ENCODE measurements at regions of chr9 and their contacts with region 1.

Region 1: DNA sequence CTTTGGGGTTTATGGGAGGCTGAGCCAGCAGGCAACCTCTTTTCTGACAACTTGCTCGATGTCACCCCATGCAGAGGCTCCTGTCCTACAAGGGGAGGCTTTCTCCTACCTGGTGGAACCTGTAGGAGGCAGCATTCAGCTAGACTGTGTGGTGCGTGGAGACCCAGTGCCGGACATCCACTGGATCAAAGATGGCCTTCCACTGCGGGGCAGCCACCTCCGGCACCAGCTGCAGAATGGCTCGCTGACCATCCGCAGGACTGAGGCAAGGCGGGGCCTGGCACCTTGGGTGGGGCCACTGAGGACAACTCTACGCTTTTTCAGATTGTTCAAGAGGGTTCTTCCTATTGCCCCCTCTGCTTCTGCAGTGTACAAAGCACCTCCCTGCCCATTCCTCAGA is 36.1 kb upstream of the ASS1 start:
- DNase-seq: no peak

Region 2: DNA sequence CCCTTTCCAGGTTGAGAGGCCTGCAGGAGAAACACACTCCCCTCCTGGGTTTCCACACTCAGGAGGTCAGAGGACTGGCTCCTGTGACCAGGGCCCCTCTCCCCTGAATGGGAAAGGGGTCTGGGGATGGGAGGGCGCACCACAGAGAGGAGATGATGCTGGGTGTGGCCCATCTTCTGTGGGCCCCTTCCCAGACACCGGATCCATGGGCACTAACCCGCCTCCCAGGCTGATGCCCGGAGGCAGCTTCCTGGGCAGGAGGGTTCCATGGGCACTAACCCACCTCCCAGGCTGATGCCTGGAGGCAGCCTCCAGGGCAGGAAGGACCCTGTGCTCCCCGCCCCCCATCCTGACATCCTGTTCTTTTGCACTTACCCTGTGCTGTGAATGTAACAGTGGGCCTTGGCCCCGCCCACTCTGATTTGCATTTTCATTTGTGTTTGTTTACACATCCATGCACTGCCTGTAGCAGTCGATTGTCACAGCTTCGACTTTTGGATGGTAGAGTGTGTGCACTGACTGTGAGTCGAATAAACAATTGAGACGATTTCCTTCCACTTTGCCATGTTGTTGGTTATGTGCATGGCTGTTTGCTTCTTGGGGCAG is 1337.0 kb before region 1 on chr9:
- intact Hi-C with region 1: loop called in 1 of 2 experiments (anchors 5 kb)
- DNase-seq: no peak

Region 3: DNA sequence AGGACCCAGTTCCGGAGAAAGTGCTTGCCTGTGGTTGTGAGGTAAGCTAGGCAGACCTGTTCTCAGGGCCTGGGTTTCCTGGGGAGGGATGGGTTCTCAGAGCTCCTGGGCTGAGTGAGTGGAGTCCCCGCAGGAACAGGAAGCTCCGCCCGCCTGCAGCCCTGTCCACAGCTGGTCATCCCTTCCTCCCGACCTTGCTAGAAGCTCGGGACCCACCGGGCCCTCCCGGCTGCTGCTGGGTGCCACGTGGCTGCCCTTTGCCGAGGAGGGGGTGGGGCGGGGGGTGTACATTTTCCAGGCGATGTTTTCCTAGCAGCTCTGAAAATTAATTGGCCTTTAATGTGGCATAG is 985.9 kb before region 1 on chr9:
- intact Hi-C with region 1: loop called in 1 of 2 experiments (anchors 10 kb)
- DNase-seq: no peak

Region 4: GRCh38 chr9:131728961-131729360 is 1320.3 kb after region 1 on chr9:
- intact Hi-C with region 1: no loop called
- DNase-seq: no peak